SK-MEL-5 (cell line): ENCODE measurements at regions of chr6 and their contacts with region 1.

Region 1: DNA sequence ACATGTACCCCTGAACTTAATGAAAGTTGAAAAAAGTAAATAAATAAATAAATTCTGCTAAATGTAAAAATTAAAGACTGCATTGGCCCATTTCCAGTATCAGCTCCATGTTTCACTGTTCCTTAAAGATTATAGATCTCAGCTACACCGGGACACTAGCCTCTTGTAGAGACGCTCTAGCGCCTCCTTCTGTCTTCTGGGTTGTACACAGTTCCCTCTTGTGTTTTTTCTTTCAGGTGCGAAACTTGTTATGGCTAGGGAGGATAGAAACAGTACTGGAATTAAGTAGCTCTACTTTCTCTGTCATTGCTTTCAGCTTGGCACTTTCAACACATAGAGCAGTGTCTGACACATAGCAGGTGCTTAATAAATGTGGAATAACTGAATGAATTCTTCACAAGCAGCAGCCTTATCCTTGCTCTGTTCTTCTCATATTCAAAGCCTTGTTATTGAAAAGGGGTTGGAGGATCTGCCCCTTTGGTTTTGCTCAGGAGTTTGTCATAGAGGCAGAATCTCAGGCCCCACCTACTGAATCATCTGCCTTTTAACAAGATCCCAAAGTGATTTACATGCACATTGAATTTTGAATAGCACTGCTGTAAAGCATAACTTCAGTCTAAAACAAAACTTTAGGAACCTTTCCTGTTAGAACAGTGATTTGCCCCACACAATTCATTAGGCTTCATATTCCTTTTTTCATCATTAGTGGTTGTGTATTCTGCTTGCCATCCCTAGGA is 92.3 kb downstream of the FIG4 start:
- DNase-seq: peak; percentile 72

Region 2: DNA sequence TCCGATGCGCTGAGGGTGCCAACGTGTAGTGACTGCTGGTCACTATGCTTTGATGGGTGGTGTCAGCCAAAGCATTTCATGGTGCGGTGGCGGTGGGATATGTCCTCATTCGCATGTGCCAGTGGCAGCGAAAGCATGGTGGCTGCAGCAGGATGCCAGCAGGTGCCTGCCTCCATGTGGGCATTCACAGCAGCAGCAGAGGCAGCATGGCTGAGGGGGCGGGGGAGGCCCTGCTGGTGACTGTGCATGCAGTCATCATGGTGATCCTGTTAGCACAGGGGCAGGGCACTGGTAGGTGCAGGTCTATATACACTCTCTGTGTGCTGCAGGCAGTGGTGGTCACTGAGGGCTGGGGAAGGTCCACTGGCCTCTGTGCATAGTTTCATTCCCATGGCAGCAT is 70.3 kb before region 1 on chr6:
- in situ Hi-C with region 1: loop called (anchors 10 kb)
- DNase-seq: no peak